PC-3 (cell line): ENCODE measurements at regions of chr6 and their contacts with region 1.

Region 1: GRCh38 chr6:7051233-7052114 is 56.3 kb upstream of the RREB1 start:
- DNase-seq: peak; percentile 60
- ATAC-seq: peak; percentile 45
- H3K4me3 ChIP-seq: peak overlapping the region; percentile 79
- H3K27ac ChIP-seq: peak overlapping the region; percentile 96
- H3K4me1 ChIP-seq: peaks cover 50% of the 10 kb centered on the region
- H3K27me3 ChIP-seq: no peaks in the 10 kb centered on the region
- CTCF ChIP-seq: no peak

Region 2: GRCh38 chr6:6505111-6505510 is 546.4 kb before region 1 on chr6:
- CTCF ChIA-PET with region 1: no interaction called
- POLR2A ChIA-PET with region 1: no interaction called
- intact Hi-C with region 1: no loop called
- DNase-seq: no peak
- ATAC-seq: no peak
- H3K4me3 ChIP-seq: no peak overlapping the region
- H3K27ac ChIP-seq: no peak overlapping the region
- H3K4me1 ChIP-seq: no peaks in the 10 kb centered on the region
- H3K27me3 ChIP-seq: peaks cover 51% of the 10 kb centered on the region; the same call in 1 of the 2 replicates
- CTCF ChIP-seq: 0 out of 2 replicates have a peak, but pooled peaks have one; percentile 14

Region 3: DNA sequence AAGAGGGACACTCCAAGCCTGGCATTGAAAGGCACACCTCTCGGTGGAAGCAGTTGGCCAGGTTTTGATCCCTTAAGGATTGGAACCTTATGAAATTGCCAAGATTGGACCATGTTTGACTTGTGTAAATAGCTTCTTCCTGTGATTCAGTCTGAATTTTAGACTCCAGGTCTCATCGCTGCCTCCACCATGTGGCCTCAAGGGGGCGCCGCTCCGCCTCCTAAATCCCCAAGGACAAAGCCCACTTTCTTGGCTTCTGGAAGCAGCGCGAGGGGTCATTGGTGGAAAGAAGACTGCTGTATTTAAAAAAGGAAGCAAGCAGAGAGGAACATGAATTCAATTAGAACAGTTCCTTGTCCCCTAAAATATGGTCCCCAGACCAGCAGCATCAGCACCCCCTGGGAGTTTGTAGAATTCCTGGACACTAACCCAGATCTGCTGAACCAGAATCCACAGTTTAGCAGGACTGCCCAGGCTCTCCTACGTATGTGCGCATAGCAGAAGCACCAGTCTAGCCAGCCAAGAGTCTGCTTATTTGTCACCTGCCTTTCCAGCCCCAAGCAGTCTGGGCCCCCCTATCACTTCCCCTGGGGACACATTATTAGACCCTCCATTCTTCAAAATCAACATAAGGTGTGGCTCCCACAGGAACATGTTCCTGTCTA is 354.5 kb before region 1 on chr6:
- CTCF ChIA-PET with region 1: no interaction called
- POLR2A ChIA-PET with region 1: no interaction called
- intact Hi-C with region 1: loop called (anchors 10 kb)
- DNase-seq: peak; percentile 90
- ATAC-seq: peak; percentile 90
- H3K4me3 ChIP-seq: no peak overlapping the region
- H3K27ac ChIP-seq: peak overlapping the region; percentile 68
- H3K4me1 ChIP-seq: peaks cover 23% of the 10 kb centered on the region
- H3K27me3 ChIP-seq: no peaks in the 10 kb centered on the region
- CTCF ChIP-seq: peak; percentile 97